ENCODE measurements at regions of chrX and their contacts with region 1.

Region 1: GRCh38 chrX:20530406-20530921 is 263.8 kb upstream of the RPS6KA3 start:
- DNase-seq: peak; percentile 51
- H3K4me3 Mint-ChIP-seq: no peak overlapping the region
- H3K27ac Mint-ChIP-seq: no peak overlapping the region
- H3K4me1 Mint-ChIP-seq: peaks cover 9% of the 10 kb centered on the region
- H3K27me3 Mint-ChIP-seq: peaks cover 61% of the 10 kb centered on the region

Region 2: GRCh38 chrX:20418379-20419150 is 111.9 kb before region 1 on chrX:
- CTCF ChIA-PET with region 1: no interaction called
- POLR2A ChIA-PET with region 1: no interaction called
- DNase-seq: no peak
- H3K4me3 Mint-ChIP-seq: no peak overlapping the region
- H3K27ac Mint-ChIP-seq: no peak overlapping the region
- H3K4me1 Mint-ChIP-seq: peaks cover 23% of the 10 kb centered on the region
- H3K27me3 Mint-ChIP-seq: no peaks in the 10 kb centered on the region

Region 3: GRCh38 chrX:20838477-20838876 is 308.0 kb after region 1 on chrX:
- CTCF ChIA-PET with region 1: no interaction called
- POLR2A ChIA-PET with region 1: no interaction called
- DNase-seq: no peak
- H3K4me3 Mint-ChIP-seq: no peak overlapping the region
- H3K27ac Mint-ChIP-seq: no peak overlapping the region
- H3K4me1 Mint-ChIP-seq: no peaks in the 10 kb centered on the region
- H3K27me3 Mint-ChIP-seq: no peaks in the 10 kb centered on the region

Region 4: DNA sequence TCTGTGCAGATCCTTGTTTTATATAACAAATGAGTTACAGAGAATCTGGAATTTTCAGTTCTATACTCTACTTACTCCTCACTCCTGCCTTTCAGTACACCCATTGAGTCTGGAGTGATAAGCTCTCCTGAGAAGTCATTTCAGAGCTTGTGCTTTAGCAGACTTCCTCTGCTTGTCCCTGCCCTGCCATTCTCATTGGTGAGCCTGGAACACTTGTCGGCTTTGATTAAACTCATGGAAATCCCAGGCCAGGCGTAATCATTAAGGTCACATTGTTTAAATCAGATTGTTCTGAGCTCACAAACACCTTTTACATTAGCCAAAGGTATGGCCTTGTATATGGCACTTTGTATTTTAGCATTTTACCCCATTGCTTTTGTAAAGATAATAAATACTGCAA is 946.4 kb after region 1 on chrX:
- CTCF ChIA-PET with region 1: interaction called, 10 read pairs
- POLR2A ChIA-PET with region 1: no interaction called
- DNase-seq: no peak
- H3K4me3 Mint-ChIP-seq: no peak overlapping the region
- H3K27ac Mint-ChIP-seq: no peak overlapping the region
- H3K4me1 Mint-ChIP-seq: no peaks in the 10 kb centered on the region
- H3K27me3 Mint-ChIP-seq: no peaks in the 10 kb centered on the region